HCT116 (cell line): ENCODE measurements at regions of chr1 and their contacts with region 1.

Region 1: DNA sequence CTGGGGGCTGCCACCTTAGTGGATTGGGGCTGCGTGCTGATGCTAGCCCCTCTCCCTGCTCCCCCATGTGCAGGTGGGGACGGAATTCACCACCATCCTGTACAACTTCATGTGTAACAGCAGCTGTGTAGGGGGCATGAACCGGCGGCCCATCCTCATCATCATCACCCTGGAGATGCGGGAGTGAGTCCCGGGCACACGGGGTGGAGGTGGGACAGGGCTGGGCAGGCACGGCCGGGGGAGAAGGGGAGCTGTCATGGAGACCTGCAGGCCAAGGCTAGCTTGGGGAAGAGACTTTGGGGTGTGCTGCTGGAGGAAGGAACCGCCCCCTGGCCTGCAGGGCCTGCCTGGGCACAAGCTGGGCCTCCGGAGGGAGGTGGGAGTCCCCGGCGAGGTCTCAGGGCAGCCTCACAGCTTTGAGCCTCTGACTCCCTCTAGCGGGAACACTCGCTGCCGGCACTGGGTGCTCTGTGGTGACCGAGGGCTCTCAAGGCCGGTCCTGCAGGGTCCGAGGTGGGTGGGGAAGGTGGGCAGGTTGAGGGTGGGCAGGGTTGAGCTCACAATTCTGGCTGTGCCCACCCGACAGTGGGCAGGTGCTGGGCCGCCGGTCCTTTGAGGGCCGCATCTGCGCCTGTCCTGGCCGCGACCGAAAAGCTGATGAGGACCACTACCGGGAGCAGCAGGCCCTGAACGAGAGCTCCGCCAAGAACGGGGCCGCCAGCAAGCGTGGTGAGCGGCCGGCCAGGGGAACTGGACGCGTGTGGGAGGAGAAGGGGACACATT is 25.0 kb upstream of the CCDC27 start:
- DNase-seq: no peak
- ATAC-seq: no peak
- H3K4me3 ChIP-seq: no peak overlapping the region
- H3K27ac ChIP-seq: no peak overlapping the region
- H3K4me1 ChIP-seq: no peaks in the 10 kb centered on the region
- H3K27me3 ChIP-seq: no peaks in the 10 kb centered on the region
- CTCF ChIP-seq: no peak
- POLR2A ChIP-seq: no peak
- RAD21 ChIP-seq: no peak

Region 2: DNA sequence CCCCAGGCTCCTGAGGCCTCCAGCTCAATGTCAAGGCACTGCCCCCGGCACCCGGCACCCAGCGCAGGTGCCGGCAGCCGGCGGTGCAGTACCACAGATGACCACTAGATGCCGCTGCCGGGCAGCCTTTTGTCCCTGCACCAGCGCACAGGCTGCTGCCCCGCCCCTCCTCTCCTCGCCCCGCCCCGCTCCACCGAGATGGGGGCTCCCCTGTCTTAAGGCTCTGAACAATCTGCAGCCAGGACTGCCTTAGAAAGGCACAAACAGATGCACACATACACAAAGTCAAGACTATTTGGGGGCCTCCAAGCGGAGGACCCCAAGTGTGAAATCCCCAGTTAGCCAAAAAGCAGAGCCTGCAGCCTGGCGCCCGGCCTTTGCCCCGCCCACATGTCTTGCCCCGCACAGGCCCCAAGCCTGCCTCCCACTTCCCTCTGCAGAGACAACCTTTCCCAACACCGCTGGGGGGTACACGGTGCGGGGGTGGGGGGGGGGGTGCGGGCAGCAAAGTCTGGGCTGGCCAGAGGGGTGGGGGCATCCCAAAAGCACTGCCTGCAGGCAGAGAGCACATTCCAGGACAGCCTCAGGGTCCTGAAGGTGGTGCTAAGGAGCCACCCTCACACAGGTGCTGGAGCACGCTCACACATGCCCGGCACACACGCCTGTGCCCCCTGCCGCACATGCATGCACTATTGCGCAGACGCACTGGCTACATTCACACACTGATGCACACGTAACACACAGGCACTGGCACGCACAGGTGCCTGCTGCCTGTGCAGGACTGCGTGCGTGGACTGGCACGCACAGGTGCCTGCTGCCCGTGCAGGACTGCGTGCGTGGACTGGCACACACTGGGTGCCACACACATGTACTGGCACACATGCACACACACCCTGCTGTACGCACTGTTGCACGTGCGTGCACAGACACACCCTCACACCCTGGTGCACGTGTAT is 235.7 kb before region 1 on chr1:
- CTCF ChIA-PET with region 1: no interaction called
- POLR2A ChIA-PET with region 1: no interaction called
- RAD21 ChIA-PET with region 1: no interaction called
- intact Hi-C with region 1: loop called (anchors 1 kb)
- DNase-seq: peak; percentile 19
- ATAC-seq: peak; percentile 86
- H3K4me3 ChIP-seq: no peak overlapping the region
- H3K27ac ChIP-seq: peak overlapping the region; percentile 22; the same call in 1 of the 2 replicates
- H3K4me1 ChIP-seq: peaks cover 0 to 26% of the 10 kb centered on the region in 2 experiments; a peak in 1 of 4 replicates
- H3K27me3 ChIP-seq: no peaks in the 10 kb centered on the region
- CTCF ChIP-seq: peak; percentile 86 to 97 (median 93)
- POLR2A ChIP-seq: no peak
- RAD21 ChIP-seq: peak; percentile 94

Region 3: GRCh38 chr1:3649342-3650247 is 77.6 kb before region 1 on chr1 and contains the start of gene WRAP73:
- CTCF ChIA-PET with region 1: no interaction called
- POLR2A ChIA-PET with region 1: no interaction called
- RAD21 ChIA-PET with region 1: no interaction called
- intact Hi-C with region 1: loop called (anchors 1 kb)
- DNase-seq: peak; percentile 82
- ATAC-seq: peak; percentile 73
- H3K4me3 ChIP-seq: peak within 1 kb of the TSS; percentile 86 to 98
- H3K27ac ChIP-seq: peak within 1 kb of the TSS; percentile 72
- H3K4me1 ChIP-seq: peaks cover 17 to 29% of the 10 kb centered on the region in 2 experiments
- H3K27me3 ChIP-seq: no peaks in the 10 kb centered on the region
- CTCF ChIP-seq: peak in 1 of 3 experiments; percentile 26; a peak in 2 of 6 replicates
- POLR2A ChIP-seq: peak; percentile 71
- RAD21 ChIP-seq: no peak
- total RNA-seq, gene WRAP73: 51.4 TPM

Region 4: DNA sequence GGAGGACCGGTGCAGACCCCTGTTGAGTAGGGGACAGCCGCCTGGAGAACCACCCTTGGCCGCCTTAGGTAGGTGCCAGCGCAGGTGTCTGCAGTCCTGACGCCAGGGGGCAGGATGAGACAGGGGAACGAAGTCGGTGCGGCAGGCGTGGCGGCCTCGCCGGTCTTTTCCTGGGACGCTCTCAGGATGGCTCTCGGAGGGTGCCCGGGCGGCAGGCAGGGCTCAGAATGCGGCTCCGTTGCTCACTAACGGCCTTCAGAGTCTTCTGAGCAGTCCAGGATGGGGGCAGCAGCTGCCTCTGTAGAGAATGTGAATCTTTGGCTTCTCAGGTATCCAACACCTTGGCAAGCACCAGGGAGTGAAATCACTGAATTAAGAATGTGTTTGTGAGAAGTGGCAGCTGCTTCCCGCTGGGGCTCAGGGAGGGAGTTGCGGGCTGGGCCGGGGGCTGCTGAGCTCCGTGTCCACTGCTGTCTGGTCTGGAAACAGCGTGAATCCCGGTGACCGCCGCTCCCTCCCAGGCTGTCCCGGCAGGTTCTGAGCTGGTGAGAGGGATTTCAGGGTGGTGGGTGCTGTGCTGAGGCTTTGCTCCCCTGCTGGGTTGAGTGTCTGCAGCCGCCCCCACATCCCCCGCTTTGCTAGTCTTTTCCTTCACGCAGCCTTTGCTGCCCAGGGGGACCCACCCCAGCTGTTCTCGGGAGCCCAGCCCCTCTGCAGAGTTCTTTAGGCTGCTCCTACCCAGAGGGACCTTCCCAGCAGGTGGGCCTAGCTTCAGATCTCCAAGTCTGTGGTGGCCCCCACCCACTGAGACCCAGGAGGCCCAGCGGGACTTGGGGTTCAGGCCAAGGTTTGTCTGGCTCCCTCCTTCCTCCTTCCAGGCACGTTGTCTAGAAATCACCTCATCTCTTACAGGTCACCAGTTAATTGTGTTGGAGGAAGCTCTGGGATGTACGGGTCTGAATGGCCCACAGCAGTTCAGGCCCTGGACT is 183.9 kb after region 1 on chr1:
- CTCF ChIA-PET with region 1: no interaction called
- POLR2A ChIA-PET with region 1: no interaction called
- RAD21 ChIA-PET with region 1: no interaction called
- intact Hi-C with region 1: no loop called
- DNase-seq: peak; percentile 54
- ATAC-seq: peak; percentile 93
- H3K4me3 ChIP-seq: peak overlapping the region in 1 of 2 experiments; percentile 40; a peak in 3 of 4 replicates
- H3K27ac ChIP-seq: no peak overlapping the region
- H3K4me1 ChIP-seq: peaks cover 2 to 9% of the 10 kb centered on the region in 2 experiments; a peak in 3 of 4 replicates
- H3K27me3 ChIP-seq: no peaks in the 10 kb centered on the region
- CTCF ChIP-seq: peak; percentile 62 to 90 (median 89); a peak in 5 of 6 replicates
- POLR2A ChIP-seq: no peak
- RAD21 ChIP-seq: peak; percentile 96